ENCODE measurements at regions of chr22 and their contacts with region 1.

Region 1: GRCh38 chr22:41403532-41404318 is 22.0 kb downstream of the TEF start:
- DNase-seq: peak; percentile 86 to 93 (median 92)
- H3K4me3 ChIP-seq: peak overlapping the region in 1 of 7 experiments; percentile 30
- H3K27ac ChIP-seq: no peak overlapping the region
- H3K4me1 ChIP-seq: peaks cover 0 to 15% (median 6%) of the 10 kb centered on the region in 4 experiments
- H3K27me3 ChIP-seq: no peaks in the 10 kb centered on the region

Region 2: DNA sequence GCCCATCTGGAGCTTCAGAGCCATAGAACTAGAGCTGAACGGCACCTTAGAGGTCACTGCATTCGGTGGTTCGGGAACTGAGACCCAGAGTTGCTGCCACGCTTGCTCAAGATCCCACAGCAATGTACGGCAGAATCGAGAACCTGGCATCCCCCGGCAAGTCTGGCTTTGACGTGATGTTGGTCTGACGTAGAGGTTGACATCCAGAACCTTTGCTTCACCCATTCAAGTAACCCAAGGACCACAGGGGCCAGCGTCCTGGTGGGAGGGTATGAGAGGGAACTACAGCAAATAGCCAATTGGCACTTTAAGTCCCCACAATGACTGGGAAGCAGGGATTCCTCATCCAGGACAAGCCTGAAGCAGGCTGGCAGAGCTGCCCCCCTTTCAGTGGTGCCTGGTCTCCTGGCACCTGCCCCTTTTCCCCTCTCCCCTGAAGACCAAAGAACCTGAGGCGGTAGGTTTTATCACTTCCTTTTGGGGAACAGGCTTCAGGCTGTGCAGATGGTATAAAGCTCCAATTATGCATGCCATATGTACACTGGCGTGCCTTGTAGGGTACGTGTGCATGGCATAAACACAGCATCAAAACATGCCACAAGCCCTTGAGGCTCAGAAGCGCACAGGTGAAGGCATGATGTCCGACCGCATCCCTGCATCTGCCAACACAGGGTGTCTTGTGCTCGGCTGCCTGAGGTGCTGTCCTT is 37.2 kb before region 1 on chr22:
- CTCF ChIA-PET with region 1: no interaction called
- POLR2A ChIA-PET with region 1: no interaction called
- DNase-seq: peak in 2 of 3 donors; percentile 34 to 46
- H3K4me3 ChIP-seq: peak overlapping the region in 6 of 7 experiments; percentile 19 to 69 (median 50)
- H3K27ac ChIP-seq: no peak overlapping the region
- H3K4me1 ChIP-seq: peaks cover 0 to 18% (median 16%) of the 10 kb centered on the region in 4 experiments
- H3K27me3 ChIP-seq: no peaks in the 10 kb centered on the region

Region 3: DNA sequence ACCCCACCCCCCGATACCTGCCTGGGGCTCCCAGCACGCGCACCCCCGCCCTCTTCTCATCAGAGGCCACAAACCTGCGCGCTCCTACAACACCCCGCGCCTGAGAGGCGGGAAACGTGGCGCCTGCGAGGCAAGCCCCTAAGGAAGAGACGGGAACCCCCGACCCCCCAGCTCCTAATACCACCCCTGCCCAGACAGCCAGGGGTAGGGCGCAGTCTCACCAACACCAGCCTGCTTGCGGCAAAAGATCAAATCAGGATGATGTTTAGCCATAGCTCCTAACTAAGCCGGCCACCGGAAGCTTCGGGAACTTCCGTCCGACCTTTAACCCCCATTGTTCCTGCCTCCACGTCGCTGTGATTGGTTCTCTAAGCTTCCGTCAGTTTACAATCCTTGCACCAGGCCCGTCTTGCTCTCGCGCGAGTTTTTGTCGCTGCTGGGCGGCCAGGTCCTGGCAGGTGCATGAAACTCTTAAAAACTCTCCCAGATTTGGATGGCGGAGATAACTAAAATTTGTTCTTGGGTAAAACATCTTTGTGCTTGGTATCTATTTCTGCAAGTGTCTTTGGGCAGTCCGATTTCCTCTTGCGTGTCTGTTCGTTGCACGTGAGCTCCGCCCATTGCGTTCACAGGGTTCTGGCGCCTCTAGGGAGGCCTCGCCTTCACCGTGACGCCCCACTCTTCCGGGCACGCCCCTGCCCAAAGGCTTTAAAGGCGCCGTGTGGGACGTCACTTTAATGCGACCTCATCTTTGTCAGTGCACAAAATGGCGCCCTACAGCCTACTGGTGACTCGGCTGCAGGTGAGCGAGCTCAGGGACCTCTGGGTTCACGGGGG is 64.9 kb after region 1 on chr22 and contains the starts of genes ACO2 and PHF5A:
- CTCF ChIA-PET with region 1: interaction called, 12 read pairs
- POLR2A ChIA-PET with region 1: interaction called, 6 read pairs
- DNase-seq: peak; percentile 98 to 99 (median 99)
- H3K4me3 ChIP-seq: peak within 1 kb of the TSS; percentile 91 to 99 (median 94)
- H3K27ac ChIP-seq: peak within 1 kb of the TSS; percentile 99 to 100
- H3K4me1 ChIP-seq: peaks cover 11 to 23% (median 18%) of the 10 kb centered on the region in 4 experiments
- H3K27me3 ChIP-seq: no peaks in the 10 kb centered on the region

Region 4: DNA sequence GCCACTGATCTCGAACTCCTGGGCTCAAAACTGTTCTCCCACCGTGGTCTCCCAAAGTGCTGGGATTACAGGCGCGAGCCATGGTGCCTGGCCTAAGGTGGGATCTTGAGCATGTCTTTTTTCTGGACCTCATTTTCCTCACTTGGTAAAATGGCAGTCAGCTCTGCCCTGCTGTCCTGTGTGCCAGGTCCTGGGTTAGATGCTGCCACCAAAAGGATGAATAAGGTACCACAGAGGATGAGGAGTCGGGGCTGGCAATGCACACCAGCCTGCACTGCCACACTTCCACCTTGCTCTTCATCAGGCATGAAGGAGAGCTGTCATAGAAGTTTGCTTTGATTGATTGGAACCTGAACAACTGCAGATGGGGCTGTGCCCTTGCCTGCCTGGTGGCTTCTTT is 97.5 kb after region 1 on chr22:
- CTCF ChIA-PET with region 1: interaction called, 36 read pairs
- POLR2A ChIA-PET with region 1: interaction called, 3 read pairs
- DNase-seq: peak; percentile 29 to 51 (median 40)
- H3K4me3 ChIP-seq: no peak overlapping the region
- H3K27ac ChIP-seq: no peak overlapping the region
- H3K4me1 ChIP-seq: no peaks in the 10 kb centered on the region
- H3K27me3 ChIP-seq: no peaks in the 10 kb centered on the region

Region 5: DNA sequence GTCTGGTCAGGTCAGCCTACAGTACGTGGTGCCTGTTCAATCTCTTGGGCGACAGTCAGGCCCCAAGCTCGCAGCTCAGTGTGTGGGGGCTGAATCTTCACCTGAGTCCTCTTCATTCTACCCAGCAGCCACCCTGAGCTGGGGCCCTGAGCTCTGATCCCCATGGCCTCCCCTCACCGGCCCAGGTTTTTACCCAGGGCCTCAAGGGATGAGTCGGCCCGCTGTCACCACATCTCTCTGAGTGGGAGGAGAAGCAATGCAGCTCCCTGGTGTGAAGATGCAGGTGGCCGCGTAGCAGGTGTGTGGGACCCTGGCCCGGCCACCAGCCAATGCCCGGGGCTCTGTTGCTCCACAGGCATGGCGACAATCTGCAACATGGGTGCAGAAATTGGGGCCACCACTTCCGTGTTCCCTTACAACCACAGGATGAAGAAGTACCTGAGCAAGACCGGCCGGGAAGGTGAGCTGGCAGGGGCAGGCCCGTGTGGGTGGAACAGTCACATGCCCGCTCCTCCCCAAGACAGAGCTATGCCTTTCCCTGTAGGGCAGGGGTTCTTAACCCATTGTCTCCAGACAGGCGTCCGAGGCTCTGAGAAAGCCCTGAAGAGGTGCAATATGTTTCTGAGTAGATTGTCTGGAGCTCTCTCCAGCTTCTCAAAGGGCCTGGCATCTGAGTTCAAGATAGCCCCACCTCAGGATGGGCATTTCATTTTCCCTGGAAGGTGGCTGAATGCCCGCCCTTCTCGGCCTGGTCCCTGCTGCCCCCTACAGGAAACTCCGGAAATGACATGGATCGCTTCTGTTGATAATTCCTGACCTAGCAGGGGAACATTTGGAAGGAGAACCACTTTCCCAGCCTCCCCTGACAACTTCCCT is 113.7 kb after region 1 on chr22:
- CTCF ChIA-PET with region 1: interaction called, 73 read pairs
- POLR2A ChIA-PET with region 1: interaction called, 7 read pairs
- DNase-seq: peak in 2 of 3 donors; percentile 16 to 29
- H3K4me3 ChIP-seq: no peak overlapping the region
- H3K27ac ChIP-seq: no peak overlapping the region
- H3K4me1 ChIP-seq: no peaks in the 10 kb centered on the region
- H3K27me3 ChIP-seq: no peaks in the 10 kb centered on the region

Region 6: GRCh38 chr22:41526837-41527799 is 123.4 kb after region 1 on chr22:
- CTCF ChIA-PET with region 1: interaction called, 76 read pairs
- POLR2A ChIA-PET with region 1: interaction called, 3 read pairs
- DNase-seq: peak; percentile 57 to 64 (median 61)
- H3K4me3 ChIP-seq: no peak overlapping the region
- H3K27ac ChIP-seq: no peak overlapping the region
- H3K4me1 ChIP-seq: peaks cover 0 to 15% (median 14%) of the 10 kb centered on the region in 4 experiments
- H3K27me3 ChIP-seq: no peaks in the 10 kb centered on the region

Region 7: GRCh38 chr22:41532908-41533825 is 129.4 kb after region 1 on chr22:
- CTCF ChIA-PET with region 1: interaction called, 76 read pairs
- POLR2A ChIA-PET with region 1: no interaction called
- DNase-seq: peak; percentile 47 to 70 (median 61)
- H3K4me3 ChIP-seq: no peak overlapping the region
- H3K27ac ChIP-seq: no peak overlapping the region
- H3K4me1 ChIP-seq: no peaks in the 10 kb centered on the region
- H3K27me3 ChIP-seq: no peaks in the 10 kb centered on the region